ENCODE measurements at regions of chr1 and their contacts with region 1.

Region 1: DNA sequence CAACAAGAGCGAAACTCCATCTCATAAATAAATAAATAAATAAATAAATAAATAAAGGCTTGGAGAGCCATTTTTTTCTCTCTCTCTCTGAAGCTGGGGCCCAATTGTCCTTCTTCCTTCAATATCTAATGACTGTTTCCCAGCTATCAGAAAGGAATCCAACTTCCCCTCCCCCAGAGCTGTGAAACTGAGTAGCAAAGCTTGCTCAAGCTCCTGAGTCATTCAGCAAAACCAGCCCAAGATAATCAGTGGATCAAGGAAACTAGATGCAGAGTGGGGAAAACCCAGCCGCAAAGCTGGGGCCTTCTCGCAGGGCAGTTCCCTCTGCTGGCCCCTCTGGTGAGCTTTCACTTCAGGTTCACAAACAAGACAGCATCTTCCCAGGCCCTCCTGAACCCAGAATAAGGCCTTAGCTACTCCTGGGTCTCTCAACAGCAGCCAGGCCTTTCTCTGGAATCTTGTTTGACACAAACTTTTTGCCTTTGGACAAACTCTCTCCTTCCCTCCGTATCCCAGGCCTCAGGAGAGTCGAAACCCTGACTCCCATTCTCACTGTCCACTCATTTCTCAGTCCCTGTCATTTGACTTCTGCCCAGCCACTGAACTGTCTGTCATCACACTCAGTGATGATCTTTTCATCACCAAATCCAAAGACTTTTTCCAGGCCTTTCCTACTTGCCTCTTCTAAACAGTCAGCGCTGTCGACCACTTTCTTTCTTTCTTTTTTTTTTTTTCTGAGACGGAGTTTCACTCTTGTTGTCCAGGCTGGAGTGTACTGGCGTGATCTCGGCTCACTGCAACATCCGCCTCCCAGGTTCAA is 18.0 kb upstream of the PTP4A2 start:
- DNase-seq: peak; percentile 98
- H3K4me3 ChIP-seq: no peak overlapping the region
- CTCF ChIP-seq: peak; percentile 52

Region 2: DNA sequence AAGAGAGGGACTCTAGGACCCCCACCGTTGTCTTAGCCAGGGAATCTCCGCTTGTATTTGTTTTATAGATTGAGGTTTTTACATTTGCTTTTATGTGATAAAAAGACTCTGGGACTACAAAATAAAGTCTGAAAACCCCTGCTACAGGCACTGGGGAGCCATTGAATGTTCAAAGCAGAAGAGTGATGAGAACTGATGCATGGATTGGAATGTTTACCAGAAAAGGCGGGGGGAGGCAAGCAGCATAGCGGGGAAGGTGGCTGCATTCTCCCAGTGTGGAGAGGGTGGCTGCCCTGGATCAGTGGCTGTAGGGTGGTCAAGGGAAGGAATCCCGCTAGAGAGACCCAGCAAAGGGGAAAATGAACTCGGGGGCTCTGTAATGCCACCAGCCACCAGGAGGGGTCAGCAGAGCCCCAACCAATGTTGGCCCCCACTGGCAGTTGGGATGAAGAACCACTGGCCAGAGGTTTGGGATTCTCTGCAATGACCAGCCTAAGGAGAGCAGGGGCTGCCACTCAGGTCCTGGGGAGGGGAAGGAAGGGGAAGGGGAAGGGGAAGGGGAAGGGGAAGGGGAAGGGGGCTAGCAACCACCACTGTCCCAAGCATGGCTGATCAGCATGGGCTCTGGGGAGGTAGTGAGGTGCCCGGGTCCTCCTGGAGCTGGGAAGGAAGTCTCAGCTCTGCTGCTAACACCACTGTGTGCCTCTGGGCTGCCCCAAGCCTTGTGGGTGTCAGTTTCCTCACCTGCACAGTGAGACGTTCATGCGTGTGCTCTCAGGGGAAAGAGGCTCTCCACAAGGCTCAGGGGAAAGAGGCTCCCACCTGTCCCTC is 292.3 kb before region 1 on chr1:
- in situ Hi-C with region 1: loop called (anchors 25 kb)
- DNase-seq: no peak
- H3K4me3 ChIP-seq: no peak overlapping the region
- CTCF ChIP-seq: peak; percentile 87

Region 3: DNA sequence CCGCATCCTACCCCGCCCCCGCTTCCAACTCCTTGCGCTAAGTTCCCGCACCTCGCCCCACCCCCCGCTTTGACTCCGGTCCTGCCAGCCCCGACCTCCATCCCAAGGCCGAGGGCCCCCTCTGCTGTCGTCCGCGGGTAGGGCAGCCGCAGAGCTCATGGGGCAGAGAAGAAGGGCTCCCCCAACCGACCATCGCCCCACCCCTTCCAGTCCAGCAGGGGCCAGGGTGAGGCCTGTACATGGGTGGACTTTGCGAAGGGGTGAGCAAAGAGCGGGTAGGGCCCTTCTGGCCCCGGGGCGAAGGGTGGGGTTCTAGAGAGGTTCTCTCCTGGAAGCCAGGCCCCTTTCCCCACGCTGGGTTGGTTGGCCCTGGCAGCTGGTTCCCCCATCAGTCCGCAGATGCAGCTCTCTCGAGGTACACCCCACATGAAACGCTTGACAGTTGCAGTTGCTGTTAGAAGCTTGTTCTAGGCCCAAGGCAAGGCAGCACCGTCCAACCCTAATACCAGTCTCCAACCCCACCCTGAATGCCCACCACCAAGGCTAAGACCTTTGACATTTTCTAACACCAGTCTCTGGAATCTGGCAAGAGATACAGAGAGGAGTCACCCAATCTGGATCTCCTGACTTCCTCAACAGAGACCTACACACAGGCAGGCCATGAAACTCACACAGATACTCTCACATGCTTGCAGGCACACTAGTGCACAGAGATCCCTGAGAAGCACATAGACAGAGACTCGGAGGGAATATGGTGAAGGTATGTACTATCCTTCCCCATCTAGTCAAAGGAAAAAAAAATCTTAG is 166.7 kb before region 1 on chr1:
- in situ Hi-C with region 1: loop called (anchors 25 kb)
- DNase-seq: peak; percentile 64
- H3K4me3 ChIP-seq: peak overlapping the region; percentile 61
- CTCF ChIP-seq: peak; percentile 91

Region 4: DNA sequence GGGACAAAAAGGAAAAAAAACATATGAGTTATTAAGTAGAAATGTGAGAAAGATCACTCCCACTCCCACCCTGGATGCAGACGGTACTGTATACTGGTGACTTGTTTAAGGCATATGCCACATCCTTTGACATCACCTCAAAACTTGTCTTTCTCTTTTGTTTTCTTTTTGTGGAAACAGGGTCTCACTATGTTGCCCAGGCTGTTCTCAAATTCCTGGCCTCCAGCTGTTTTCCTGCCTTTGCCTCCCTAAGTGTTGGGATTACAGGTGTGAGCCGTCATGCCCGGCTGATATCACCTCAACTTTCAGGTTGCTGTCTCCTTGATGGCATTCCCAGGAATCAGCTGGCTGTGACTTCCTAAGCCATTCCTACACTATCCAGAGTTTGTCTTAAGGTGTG is 39.1 kb after region 1 on chr1:
- in situ Hi-C with region 1: no loop called
- DNase-seq: no peak
- H3K4me3 ChIP-seq: no peak overlapping the region
- CTCF ChIP-seq: no peak

Measured in astrocyte of the cerebellum (primary cell).